Naive thymus-derived CD4-positive, alpha-beta T cell (primary cell): ENCODE measurements at regions of chr1 and their contacts with region 1.

Region 1: DNA sequence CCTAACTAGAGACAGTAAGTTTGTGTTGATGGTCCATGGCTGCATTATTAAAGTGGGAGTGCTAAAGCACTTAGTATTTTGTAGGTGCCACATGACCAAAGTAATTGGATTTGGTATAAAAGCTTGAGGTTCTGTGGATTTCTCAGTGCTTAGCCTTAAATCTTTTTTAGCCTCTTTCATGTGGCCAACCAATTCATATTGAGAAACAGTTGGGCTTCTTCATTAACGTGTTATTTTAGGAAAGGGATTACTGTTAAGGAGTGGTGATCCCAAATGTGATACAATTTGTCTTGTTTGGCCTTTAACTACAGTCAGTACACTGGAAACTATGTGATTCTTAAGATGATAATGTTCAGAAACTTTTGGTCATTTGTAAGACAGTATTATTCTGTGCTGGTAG is 25.5 kb downstream of the MAN1A2 start:
- DNase-seq: no peak
- ATAC-seq: no peak
- H3K4me3 ChIP-seq: no peak overlapping the region
- H3K4me3 Mint-ChIP-seq: no peak overlapping the region
- H3K27ac ChIP-seq: no peak overlapping the region
- H3K27ac Mint-ChIP-seq: no peak overlapping the region
- H3K4me1 ChIP-seq: peaks cover 6 to 11% of the 10 kb centered on the region in 2 donors
- H3K4me1 Mint-ChIP-seq: peaks cover 11 to 88% (median 76%) of the 10 kb centered on the region in 7 donors
- H3K27me3 ChIP-seq: no peaks in the 10 kb centered on the region
- H3K27me3 Mint-ChIP-seq: no peaks in the 10 kb centered on the region

Region 2: DNA sequence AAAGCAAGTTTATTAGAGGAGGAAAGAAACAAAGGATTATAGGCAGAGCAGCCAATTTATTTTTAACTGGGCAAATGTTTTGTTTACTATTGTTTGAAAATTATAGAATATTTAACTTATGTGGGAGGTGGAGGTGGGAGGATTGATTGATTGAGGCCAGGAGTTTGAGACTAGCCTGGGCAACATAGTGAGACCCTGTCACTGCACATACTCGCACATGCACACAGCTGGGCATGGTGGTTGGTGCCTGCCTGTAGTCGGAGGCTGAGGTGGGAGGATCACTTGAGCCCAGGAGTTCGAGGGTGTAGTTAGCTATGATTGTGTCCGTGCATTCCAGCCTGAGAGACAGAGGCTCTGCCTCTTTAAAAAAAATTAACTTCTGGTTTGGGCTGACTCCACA is 18.8 kb before region 1 on chr1:
- CTCF ChIA-PET with region 1: no interaction called
- POLR2A ChIA-PET with region 1: no interaction called
- intact Hi-C with region 1: loop called in 1 of 2 experiments (anchors 2 kb)
- DNase-seq: no peak
- ATAC-seq: no peak
- H3K4me3 ChIP-seq: no peak overlapping the region
- H3K4me3 Mint-ChIP-seq: peak overlapping the region in 3 of 10 donors; percentile 14 to 34 (median 29)
- H3K27ac ChIP-seq: no peak overlapping the region
- H3K27ac Mint-ChIP-seq: peak overlapping the region in 1 of 9 donors; percentile 24
- H3K4me1 ChIP-seq: peaks cover 16 to 34% of the 10 kb centered on the region in 2 donors
- H3K4me1 Mint-ChIP-seq: peaks cover 29 to 82% (median 67%) of the 10 kb centered on the region in 7 donors
- H3K27me3 ChIP-seq: no peaks in the 10 kb centered on the region
- H3K27me3 Mint-ChIP-seq: no peaks in the 10 kb centered on the region